ENCODE measurements at regions of chr7 and their contacts with region 1.

Region 1: DNA sequence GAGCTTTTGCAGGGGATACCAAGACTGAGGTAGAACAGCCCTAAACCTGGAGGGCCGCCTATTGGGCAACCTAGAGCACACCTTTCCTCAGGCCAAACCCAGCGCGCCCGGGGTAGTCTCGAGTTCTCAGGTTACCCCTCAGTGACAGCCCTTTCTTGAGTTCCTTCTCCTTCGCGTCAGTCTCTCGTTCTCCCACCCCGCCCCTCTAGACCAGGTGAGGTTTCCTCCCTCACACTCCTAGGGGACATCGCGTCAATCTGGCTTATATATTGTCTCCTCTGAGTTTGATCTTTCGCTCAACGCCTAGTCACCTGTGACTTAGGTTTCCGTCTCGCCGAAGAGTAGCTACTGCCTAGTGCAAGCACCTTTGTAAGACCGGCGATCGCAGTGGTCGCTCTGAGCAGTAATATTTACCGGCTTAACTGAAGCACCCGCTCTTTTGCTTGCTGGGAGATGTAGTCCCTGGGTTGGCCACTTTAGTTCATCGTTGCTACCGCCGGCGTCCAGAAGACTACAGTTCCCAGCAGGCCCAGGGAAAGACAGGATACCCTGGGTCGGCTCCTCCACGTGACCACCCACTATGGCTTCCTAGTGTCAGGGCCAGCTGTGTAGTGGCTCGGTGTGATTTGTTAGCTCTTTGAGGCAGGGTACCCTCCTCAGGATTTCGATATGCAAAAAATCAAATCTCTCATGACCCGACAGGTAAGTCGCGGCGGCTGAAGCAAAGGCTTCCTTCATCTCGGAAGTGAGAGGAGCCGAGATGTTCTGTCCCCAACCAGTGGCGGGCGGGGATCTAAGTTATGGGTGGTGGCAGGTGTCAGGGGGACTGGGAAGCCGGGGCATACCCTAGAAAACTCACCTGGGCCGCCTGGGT is at the start of gene VPS50:
- DNase-seq: peak; percentile 91
- H3K4me3 Mint-ChIP-seq: peak within 1 kb of the TSS; percentile 98
- H3K27ac Mint-ChIP-seq: peak within 1 kb of the TSS; percentile 93
- H3K4me1 Mint-ChIP-seq: peaks cover 18% of the 10 kb centered on the region
- H3K27me3 Mint-ChIP-seq: peaks cover 7% of the 10 kb centered on the region
- total RNA-seq, gene VPS50: 16.7 and 17.0 TPM in 2 replicates

Region 2: GRCh38 chr7:91683823-91684222 is 1548.2 kb before region 1 on chr7:
- intact Hi-C with region 1: no loop called
- DNase-seq: no peak
- H3K4me3 Mint-ChIP-seq: no peak overlapping the region
- H3K27ac Mint-ChIP-seq: no peak overlapping the region
- H3K4me1 Mint-ChIP-seq: no peaks in the 10 kb centered on the region
- H3K27me3 Mint-ChIP-seq: no peaks in the 10 kb centered on the region

Region 3: DNA sequence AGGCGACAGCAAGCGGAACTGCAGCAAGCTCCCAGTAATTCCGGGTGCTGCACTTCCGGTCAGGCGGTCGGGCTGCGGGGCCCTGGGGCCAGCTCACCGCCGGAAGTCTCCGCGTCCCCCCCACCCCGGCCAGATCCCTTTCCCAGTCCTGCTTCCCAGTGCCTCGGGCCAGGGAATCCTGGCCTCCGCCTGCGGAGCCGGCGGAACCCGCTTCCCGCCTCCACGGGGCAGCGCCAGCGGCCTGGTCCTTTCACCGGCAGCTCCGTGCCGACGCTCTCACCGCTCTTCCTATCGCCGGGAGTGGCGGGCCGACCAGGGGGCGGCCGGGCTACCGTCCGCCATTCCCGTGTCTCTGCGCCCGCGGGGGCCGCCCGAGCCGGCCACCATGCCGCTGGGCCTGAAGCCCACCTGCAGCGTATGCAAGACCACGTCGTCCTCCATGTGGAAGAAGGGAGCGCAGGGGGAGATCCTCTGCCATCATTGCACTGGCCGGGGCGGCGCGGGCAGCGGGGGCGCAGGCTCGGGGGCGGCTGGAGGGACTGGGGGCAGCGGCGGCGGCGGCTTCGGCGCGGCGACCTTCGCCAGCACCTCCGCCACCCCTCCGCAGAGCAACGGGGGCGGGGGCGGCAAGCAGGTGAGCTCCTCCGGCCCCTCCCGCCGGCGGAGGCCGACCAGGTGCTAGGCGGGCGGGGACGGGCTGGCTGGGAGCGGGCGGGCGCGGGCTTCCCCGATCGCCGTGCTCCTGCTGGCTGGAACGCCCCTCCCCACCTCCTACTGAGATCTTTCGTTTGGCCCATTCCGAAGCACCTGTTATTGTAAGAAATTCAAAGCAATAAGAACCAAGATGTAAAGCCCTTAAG is 784.5 kb before region 1 on chr7 and contains the start of gene GATAD1:
- intact Hi-C with region 1: loop called (anchors 5 kb)
- DNase-seq: peak; percentile 79
- H3K4me3 Mint-ChIP-seq: peak within 1 kb of the TSS; percentile 89
- H3K27ac Mint-ChIP-seq: peak within 1 kb of the TSS; percentile 92
- H3K4me1 Mint-ChIP-seq: peaks cover 15% of the 10 kb centered on the region
- H3K27me3 Mint-ChIP-seq: no peaks in the 10 kb centered on the region
- total RNA-seq, gene GATAD1: 18.4 and 18.8 TPM in 2 replicates

Region 4: DNA sequence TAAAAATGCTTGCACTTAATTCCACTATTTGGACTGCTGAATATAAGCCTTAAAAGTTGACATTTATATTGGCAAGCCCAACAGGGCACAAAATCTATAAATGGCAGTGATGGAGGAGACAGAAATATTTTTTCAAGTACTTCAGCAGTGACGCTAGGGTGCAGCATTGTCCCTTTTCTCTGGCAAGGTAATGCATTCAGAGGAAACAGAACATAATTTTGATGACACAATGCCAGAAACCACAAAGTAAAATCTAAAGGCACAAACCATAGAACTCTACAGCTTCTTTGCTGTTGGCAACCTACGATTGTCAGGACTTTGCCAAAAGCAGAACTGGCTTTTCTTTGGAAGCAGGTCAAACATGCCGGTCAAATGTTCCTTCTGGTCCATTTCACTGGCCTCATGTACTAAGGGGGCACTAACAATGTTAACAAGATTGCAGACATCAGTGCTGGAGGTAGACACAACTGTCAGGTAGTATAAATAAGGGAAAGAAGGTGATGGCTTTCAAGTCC is 611.0 kb before region 1 on chr7:
- intact Hi-C with region 1: loop called (anchors 1 kb)
- DNase-seq: peak; percentile 74
- H3K4me3 Mint-ChIP-seq: peak overlapping the region; percentile 75
- H3K27ac Mint-ChIP-seq: peak overlapping the region; percentile 89
- H3K4me1 Mint-ChIP-seq: peaks cover 58% of the 10 kb centered on the region
- H3K27me3 Mint-ChIP-seq: no peaks in the 10 kb centered on the region

Region 5: DNA sequence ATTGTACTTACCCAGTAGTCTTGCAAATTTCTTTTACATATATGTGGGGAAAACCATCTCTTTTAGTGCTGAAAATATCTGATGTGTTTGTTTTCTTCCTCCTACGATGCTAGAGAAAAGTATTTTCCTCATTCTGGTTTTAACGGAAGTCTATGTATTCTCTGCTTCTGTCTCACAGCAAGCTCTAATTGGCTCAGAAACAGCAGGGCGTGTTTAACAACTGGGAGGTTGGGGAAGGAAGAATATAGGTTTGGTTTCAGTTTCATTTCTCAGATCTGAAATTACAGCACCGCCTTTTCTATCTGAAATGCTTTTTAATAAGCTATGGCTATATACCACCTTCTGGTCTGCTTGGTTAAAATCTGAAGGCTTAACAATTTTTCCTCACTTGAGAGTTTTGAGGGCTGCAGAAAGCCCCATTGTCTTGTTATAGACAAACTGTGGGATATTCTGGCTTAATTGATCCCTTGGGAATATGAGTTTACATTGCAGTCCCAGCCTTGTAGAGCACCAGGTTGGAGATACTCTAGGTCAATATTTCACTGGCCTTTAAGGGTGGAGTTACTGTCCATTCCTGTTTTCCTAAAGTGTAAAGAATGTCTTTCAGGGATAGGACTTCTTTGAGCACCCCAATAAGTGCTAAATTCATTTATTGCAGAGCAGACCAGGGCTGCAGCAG is 114.0 kb before region 1 on chr7 and contains the start of gene SAMD9:
- intact Hi-C with region 1: loop called (anchors 1 kb)
- DNase-seq: peak; percentile 63
- H3K4me3 Mint-ChIP-seq: peak within 1 kb of the TSS; percentile 91
- H3K27ac Mint-ChIP-seq: peak within 1 kb of the TSS; percentile 82
- H3K4me1 Mint-ChIP-seq: peaks cover 60% of the 10 kb centered on the region
- H3K27me3 Mint-ChIP-seq: no peaks in the 10 kb centered on the region
- total RNA-seq, gene SAMD9: 11.5 and 11.8 TPM in 2 replicates

Region 6: GRCh38 chr7:93185303-93186027 is 46.6 kb before region 1 on chr7:
- intact Hi-C with region 1: no loop called
- DNase-seq: no peak
- H3K4me3 Mint-ChIP-seq: no peak overlapping the region
- H3K27ac Mint-ChIP-seq: no peak overlapping the region
- H3K4me1 Mint-ChIP-seq: no peaks in the 10 kb centered on the region
- H3K27me3 Mint-ChIP-seq: peaks cover 33% of the 10 kb centered on the region

Region 7: GRCh38 chr7:93249491-93250148 is 17.6 kb after region 1 on chr7:
- intact Hi-C with region 1: no loop called
- DNase-seq: no peak
- H3K4me3 Mint-ChIP-seq: no peak overlapping the region
- H3K27ac Mint-ChIP-seq: no peak overlapping the region
- H3K4me1 Mint-ChIP-seq: no peaks in the 10 kb centered on the region
- H3K27me3 Mint-ChIP-seq: no peaks in the 10 kb centered on the region

Region 8: DNA sequence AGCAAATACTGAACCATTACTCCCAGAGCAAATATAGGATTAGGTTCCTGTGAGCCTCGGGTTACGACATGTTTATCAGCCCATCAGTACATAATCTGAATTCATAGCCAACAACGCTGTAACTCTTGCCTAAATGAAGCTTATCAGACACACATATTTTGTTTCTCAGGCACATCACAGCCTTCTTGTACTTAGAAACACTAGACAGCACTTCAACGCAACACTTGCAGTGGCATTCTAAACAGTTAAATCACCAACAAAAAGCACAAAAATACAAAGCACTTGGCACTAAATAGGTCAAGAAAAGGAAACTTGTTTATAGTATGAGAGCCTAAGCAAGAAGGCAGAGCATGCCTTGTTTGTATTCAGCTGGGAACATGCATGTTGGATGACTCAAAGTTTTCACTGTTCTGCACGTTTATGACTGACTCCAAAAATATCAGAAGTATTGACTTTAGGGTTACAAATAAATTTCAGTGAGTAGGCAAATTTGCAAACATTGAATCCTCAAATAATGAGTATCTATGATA is 75.2 kb after region 1 on chr7:
- intact Hi-C with region 1: no loop called
- DNase-seq: no peak
- H3K4me3 Mint-ChIP-seq: no peak overlapping the region
- H3K27ac Mint-ChIP-seq: no peak overlapping the region
- H3K4me1 Mint-ChIP-seq: no peaks in the 10 kb centered on the region
- H3K27me3 Mint-ChIP-seq: no peaks in the 10 kb centered on the region

Region 9: DNA sequence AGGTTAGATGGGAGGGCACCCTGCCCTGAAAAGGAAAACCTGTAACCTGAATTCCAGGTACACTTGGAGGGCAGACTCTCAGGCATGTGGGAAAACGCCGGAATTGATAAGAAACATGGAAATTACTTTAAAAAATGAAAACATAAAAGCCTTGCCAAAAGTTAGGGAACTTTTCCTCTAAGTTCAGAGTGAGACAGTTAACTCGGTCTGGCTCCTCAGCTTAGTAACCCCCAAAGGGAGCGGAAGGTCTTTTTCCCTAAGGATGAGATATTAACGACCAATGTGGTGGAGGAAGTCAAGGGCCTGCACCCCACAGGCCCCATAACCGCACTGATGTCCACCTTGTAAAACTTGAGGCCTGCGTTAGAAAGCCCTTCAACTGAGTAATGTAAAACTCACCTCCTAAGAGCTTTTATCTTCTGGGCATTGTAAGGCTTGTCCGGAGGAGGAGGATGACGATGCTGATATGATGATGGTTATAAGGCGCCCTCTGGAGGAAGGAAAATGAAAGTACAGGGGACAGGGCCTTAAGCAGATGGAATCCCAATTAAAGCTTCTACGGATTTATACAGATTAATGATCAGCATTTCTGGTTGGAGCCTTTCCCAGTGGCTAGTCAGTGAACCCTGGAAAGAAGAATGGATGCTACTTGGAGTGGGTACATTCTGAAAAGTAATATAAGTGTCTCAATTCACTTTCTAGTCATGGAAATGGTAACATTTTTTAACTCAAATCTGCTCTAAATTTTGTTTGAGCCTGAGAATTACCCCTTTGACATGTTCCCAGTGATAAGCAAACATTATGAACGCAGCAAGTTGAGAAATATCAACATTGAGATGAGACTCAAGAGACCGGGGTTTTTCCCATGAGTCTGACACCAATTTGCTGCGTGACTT is 1163.4 kb after region 1 on chr7:
- intact Hi-C with region 1: loop called (anchors 5 kb)
- DNase-seq: peak; percentile 46
- H3K4me3 Mint-ChIP-seq: peak overlapping the region; percentile 86
- H3K27ac Mint-ChIP-seq: peak overlapping the region; percentile 83
- H3K4me1 Mint-ChIP-seq: peaks cover 35% of the 10 kb centered on the region
- H3K27me3 Mint-ChIP-seq: no peaks in the 10 kb centered on the region